Activated B cell treated with CpG ODN at 0.5 μM for 24 hours (primary cell): ENCODE measurements at regions of chr7 and their contacts with region 1.

Region 1: DNA sequence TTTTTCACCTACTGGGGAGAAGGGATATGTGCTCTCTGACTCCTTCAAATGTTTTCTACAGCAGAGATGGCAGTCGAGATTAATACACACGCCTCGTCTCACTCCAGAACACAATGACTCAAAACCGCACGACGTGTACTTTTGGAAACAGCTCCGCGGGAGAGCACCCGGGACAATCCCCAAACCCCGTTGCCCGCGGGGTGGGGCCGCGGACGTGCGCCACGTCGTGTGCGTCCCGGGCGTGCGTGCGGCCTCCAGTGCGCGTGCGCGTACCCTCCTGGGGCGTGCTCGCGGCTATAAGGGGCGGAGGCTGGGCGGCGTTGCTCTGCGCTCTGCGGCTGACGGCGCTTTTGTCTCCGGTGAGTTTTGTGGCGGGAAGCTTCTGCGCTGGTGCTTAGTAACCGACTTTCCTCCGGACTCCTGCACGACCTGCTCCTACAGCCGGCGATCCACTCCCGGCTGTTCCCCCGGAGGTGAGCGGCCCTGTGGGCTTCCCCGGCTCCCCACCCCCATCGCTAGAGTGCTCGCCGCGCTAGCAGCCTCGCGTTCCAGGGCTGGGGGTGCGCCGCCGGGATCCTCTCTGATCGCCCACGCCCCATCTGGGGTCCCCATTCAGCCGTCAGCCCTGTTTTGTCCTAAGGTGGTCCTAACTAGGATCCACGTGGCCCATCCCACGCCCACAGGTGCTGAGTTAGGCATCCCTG is at the start of gene HILPDA:
- DNase-seq: peak; percentile 95
- ATAC-seq: peak; percentile 87
- H3K4me3 Mint-ChIP-seq: peak within 1 kb of the TSS; percentile 95
- H3K27ac Mint-ChIP-seq: peak within 1 kb of the TSS; percentile 100
- H3K4me1 Mint-ChIP-seq: peaks cover 44% of the 10 kb centered on the region
- H3K27me3 Mint-ChIP-seq: no peaks in the 10 kb centered on the region
- CTCF ChIP-seq: no peak
- total RNA-seq, gene HILPDA: 14.5 and 17.0 TPM in 2 replicates

Region 2: GRCh38 chr7:127755521-127755920 is 700.2 kb before region 1 on chr7:
- CTCF ChIA-PET with region 1: no interaction called
- POLR2A ChIA-PET with region 1: no interaction called
- intact Hi-C with region 1: no loop called
- DNase-seq: no peak
- ATAC-seq: no peak
- H3K4me3 Mint-ChIP-seq: no peak overlapping the region
- H3K27ac Mint-ChIP-seq: no peak overlapping the region
- H3K4me1 Mint-ChIP-seq: peaks cover 38% of the 10 kb centered on the region
- H3K27me3 Mint-ChIP-seq: no peaks in the 10 kb centered on the region
- CTCF ChIP-seq: no peak

Region 3: DNA sequence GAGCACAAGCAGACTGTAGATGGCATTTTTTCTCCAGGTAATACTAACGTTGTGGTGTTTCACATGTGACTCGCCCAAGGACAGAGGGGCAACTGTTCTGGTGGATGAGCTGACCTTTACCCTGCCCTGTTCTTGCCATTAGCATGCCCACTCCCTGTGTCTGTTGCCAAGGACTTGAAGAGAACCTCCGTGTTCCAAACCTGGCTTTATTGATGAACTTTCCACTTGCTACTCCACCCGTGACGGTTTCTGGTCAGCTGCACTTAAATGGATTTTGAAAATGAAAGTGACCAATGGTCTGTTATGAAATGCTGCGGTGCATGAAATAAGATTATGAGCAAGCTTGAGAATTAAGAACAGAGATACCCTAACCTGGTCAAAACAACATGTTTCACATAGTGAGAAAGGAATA is 454.8 kb before region 1 on chr7:
- CTCF ChIA-PET with region 1: no interaction called
- POLR2A ChIA-PET with region 1: no interaction called
- intact Hi-C with region 1: no loop called
- DNase-seq: no peak
- ATAC-seq: no peak
- H3K4me3 Mint-ChIP-seq: no peak overlapping the region
- H3K27ac Mint-ChIP-seq: peak overlapping the region; percentile 44
- H3K4me1 Mint-ChIP-seq: peaks cover 60% of the 10 kb centered on the region
- H3K27me3 Mint-ChIP-seq: no peaks in the 10 kb centered on the region
- CTCF ChIP-seq: no peak

Region 4: GRCh38 chr7:128201051-128201689 is 254.5 kb before region 1 on chr7:
- CTCF ChIA-PET with region 1: no interaction called
- POLR2A ChIA-PET with region 1: no interaction called
- intact Hi-C with region 1: no loop called
- DNase-seq: no peak
- ATAC-seq: peak; percentile 37
- H3K4me3 Mint-ChIP-seq: peak overlapping the region; percentile 71
- H3K27ac Mint-ChIP-seq: no peak overlapping the region
- H3K4me1 Mint-ChIP-seq: peaks cover 11% of the 10 kb centered on the region
- H3K27me3 Mint-ChIP-seq: peaks cover 49% of the 10 kb centered on the region
- CTCF ChIP-seq: no peak

Region 5: GRCh38 chr7:128398016-128398840 is 57.5 kb before region 1 on chr7:
- CTCF ChIA-PET with region 1: interaction called, 46 read pairs
- POLR2A ChIA-PET with region 1: no interaction called
- intact Hi-C with region 1: loop called (anchors 1 kb)
- DNase-seq: peak; percentile 42
- ATAC-seq: peak; percentile 54
- H3K4me3 Mint-ChIP-seq: no peak overlapping the region
- H3K27ac Mint-ChIP-seq: no peak overlapping the region
- H3K4me1 Mint-ChIP-seq: no peaks in the 10 kb centered on the region
- H3K27me3 Mint-ChIP-seq: no peaks in the 10 kb centered on the region
- CTCF ChIP-seq: peak; percentile 78

Region 6: GRCh38 chr7:128420773-128421172 is 34.9 kb before region 1 on chr7:
- CTCF ChIA-PET with region 1: interaction called, 442 read pairs
- POLR2A ChIA-PET with region 1: interaction called, 4 read pairs
- intact Hi-C with region 1: no loop called
- DNase-seq: no peak
- ATAC-seq: no peak
- H3K4me3 Mint-ChIP-seq: no peak overlapping the region
- H3K27ac Mint-ChIP-seq: no peak overlapping the region
- H3K4me1 Mint-ChIP-seq: no peaks in the 10 kb centered on the region
- H3K27me3 Mint-ChIP-seq: no peaks in the 10 kb centered on the region
- CTCF ChIP-seq: no peak

Region 7: DNA sequence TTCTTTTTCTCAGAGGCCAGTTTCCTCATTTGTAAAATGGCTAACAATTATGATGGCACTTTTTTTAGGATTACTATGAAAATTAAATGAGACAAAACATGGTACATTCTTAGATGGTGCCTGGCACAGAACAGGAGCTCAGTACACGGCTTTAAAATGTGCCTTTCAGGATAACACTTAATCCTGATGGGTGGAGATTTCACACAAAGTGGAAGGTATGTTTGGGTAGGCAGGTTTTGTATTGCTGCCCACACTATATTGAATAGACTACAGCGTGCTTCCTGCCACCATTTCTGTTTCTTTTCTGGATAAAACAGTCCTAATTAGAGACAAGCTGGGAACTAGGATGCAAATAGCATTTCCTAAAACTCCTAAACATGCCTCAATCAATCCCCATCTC is 23.9 kb before region 1 on chr7:
- CTCF ChIA-PET with region 1: interaction called, 442 read pairs
- POLR2A ChIA-PET with region 1: interaction called, 61 read pairs
- intact Hi-C with region 1: loop called (anchors 1 kb)
- DNase-seq: no peak
- ATAC-seq: no peak
- H3K4me3 Mint-ChIP-seq: no peak overlapping the region
- H3K27ac Mint-ChIP-seq: no peak overlapping the region
- H3K4me1 Mint-ChIP-seq: peaks cover 4% of the 10 kb centered on the region
- H3K27me3 Mint-ChIP-seq: peaks cover 5% of the 10 kb centered on the region
- CTCF ChIP-seq: no peak

Region 8: DNA sequence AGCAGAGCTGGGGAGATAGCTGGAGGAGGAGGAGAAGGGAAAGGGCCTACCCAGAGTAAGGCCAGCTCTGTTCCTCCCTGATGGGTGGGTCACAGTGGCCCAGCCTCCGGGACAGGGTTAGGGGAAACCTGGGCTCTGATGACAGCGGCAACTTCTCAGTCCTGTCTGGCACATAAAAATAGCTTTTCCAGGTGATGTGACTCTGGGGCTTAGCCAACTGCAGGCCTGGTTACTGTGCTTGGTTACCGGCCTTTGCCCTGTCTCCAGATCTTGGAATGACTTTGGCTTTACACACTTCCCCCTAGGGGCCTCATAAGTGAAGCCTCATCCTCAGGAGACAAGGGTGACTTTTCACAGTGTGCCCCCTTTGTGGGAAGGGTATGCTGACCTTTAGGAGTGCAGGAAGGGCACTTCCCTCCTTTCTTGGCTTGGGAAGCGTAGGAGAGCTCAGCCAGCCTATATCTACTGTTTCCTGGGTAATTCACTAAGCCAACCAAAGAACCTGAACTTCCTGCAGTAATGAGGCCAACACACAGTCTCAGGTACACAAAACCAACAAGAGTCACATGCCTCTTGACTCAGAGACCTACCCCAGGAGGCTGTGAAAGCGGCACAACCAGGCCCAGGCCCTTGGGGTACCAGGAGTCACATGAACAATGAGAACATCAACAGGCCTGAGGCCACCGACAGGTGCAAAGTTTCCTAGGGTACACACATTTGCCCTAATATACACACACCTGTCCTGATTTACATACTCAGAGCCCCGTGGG is 11.7 kb before region 1 on chr7:
- CTCF ChIA-PET with region 1: interaction called, 36 read pairs
- POLR2A ChIA-PET with region 1: interaction called, 61 read pairs
- intact Hi-C with region 1: no loop called
- DNase-seq: no peak
- ATAC-seq: peak; percentile 28
- H3K4me3 Mint-ChIP-seq: no peak overlapping the region
- H3K27ac Mint-ChIP-seq: peak overlapping the region; percentile 3
- H3K4me1 Mint-ChIP-seq: peaks cover 16% of the 10 kb centered on the region
- H3K27me3 Mint-ChIP-seq: no peaks in the 10 kb centered on the region
- CTCF ChIP-seq: no peak